ENCODE measurements at regions of chr10 and their contacts with region 1.

Region 1: GRCh38 chr10:69237528-69238159 is 17.5 kb downstream of the HKDC1 start:
- H3K4me3 Mint-ChIP-seq: no peak overlapping the region
- H3K27ac Mint-ChIP-seq: no peak overlapping the region
- H3K4me1 Mint-ChIP-seq: no peaks in the 10 kb centered on the region
- H3K27me3 Mint-ChIP-seq: no peaks in the 10 kb centered on the region

Region 2: GRCh38 chr10:68052463-68052862 is 1185.2 kb before region 1 on chr10:
- intact Hi-C with region 1: no loop called
- H3K4me3 Mint-ChIP-seq: no peak overlapping the region
- H3K27ac Mint-ChIP-seq: no peak overlapping the region
- H3K4me1 Mint-ChIP-seq: peaks cover 17% of the 10 kb centered on the region
- H3K27me3 Mint-ChIP-seq: no peaks in the 10 kb centered on the region

Region 3: DNA sequence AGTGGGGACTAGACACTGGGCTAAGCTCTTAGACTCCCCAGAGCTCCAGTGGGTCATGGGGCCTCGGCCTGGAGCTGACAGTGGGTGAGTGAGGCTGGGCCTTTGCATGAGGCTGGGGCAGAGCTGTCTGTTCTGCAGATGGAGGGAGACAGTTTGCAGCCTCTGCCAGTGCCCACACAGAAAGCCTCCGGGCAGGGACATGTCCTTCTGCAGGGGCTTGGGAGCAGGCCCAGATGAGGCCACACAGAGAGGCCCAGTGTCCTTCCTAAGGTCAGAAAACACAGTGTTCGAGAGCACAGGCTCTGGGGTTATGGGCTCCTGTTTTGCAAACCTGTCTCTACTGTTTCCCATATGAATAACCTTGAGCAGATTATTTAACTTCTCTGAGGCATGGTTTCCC is 15.5 kb after region 1 on chr10:
- intact Hi-C with region 1: no loop called
- H3K4me3 Mint-ChIP-seq: no peak overlapping the region
- H3K27ac Mint-ChIP-seq: no peak overlapping the region
- H3K4me1 Mint-ChIP-seq: peaks cover 5% of the 10 kb centered on the region
- H3K27me3 Mint-ChIP-seq: peaks cover 2% of the 10 kb centered on the region

Region 4: DNA sequence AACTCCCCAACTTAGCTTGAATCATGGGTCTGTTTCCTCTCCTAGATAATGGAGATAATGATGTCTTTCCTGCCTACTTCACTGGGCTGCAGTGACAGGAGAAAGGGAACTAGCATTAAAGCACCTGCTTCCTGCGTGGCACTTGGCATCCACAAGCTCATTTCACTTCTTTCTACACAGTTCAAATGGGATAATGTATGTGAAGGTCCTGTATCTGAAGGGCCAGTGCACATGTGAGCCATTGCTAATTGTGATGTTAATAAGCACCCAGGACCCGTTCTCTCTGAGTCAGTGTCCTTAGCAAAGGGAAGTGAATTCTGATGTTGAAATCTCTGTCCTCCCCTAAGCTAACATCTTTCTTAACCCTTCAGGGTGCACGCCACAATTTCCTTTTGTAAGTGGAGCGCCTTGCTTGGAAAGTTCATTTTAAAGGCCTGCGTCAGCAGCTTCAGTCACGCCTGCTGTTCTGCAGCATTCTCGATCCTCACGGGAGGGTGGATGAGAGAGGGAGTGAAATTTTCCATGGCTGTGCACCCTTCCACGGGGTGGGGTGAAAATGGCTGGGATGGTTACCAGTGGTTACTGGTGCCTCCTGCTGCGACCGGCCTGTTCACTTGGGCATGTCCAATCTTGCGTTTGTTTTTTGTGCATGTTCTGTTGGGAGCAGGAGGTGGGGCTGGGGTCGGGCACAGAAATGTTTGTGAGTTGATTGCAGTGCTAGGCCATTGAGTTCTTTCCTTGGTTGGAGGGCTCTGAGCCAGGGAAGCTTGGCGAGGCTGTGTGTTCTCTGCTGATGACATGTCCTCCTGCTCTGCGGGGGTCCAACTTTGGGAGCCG is 99.9 kb after region 1 on chr10:
- intact Hi-C with region 1: no loop called
- H3K4me3 Mint-ChIP-seq: peak overlapping the region; percentile 40
- H3K27ac Mint-ChIP-seq: peak overlapping the region; percentile 64
- H3K4me1 Mint-ChIP-seq: peaks cover 80% of the 10 kb centered on the region
- H3K27me3 Mint-ChIP-seq: no peaks in the 10 kb centered on the region

Region 5: GRCh38 chr10:69392481-69393000 is 154.9 kb after region 1 on chr10:
- intact Hi-C with region 1: loop called (anchors 1 kb)
- H3K4me3 Mint-ChIP-seq: no peak overlapping the region
- H3K27ac Mint-ChIP-seq: no peak overlapping the region
- H3K4me1 Mint-ChIP-seq: peaks cover 15% of the 10 kb centered on the region
- H3K27me3 Mint-ChIP-seq: no peaks in the 10 kb centered on the region